Activated T-helper 2 cell treated with anti-CD3 and anti-CD28 coated beads, Interferon-gamma antibody, Interleukin-2, Interleukin-4, amounts not matched to agents 10 μg/mL and 5 μg/mL and 100 μg/mL, durations not matched to agents 14 hours and 24 hours and 36 hours (primary cell): ENCODE measurements at regions of chr20 and their contacts with region 1.

Region 1: DNA sequence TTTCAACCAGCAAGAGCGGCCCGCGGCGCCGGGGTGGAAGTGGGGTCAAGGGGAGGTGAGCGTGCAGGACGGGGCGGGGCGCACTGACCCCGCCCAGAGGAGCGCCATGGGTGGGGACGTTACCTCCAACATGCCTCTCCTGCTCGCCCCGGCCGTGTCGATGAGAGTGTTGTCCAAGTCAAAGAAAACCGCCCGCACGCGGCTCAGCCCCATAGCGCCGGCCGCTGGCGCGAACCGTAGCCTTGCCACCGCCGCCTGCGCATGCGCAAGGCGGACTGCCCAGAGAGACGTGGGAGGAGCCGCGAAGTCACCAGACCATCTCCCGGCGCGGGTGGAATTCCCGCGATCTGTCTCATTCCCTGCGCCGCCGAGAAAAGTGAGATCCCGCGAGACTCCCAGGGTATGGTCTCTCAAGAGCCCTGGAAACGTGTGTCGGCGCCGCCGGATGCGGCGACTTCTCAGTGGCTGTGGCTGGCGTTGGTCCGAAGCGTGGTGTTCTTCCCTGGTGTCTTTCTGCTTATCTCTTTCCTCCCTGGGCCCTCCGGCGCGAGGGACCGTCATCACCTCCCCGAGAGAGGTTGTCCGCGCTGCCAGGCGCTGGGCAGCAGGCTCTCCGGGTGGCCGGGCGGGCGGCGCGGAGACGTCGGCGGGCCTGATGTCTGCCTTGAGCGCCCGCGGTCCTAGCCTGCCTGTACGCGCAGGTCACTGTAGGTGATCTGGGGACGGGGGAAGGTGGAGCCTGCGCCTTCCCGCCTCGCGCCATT is at the start of gene NANP:
- DNase-seq: peak; percentile 89
- H3K4me3 Mint-ChIP-seq: peak within 1 kb of the TSS; percentile 89
- H3K27ac Mint-ChIP-seq: peak within 1 kb of the TSS; percentile 95
- H3K4me1 Mint-ChIP-seq: peaks cover 26% of the 10 kb centered on the region
- H3K27me3 Mint-ChIP-seq: no peaks in the 10 kb centered on the region
- total RNA-seq, gene NANP: 7.9 and 9.1 TPM in 2 replicates

Region 2: DNA sequence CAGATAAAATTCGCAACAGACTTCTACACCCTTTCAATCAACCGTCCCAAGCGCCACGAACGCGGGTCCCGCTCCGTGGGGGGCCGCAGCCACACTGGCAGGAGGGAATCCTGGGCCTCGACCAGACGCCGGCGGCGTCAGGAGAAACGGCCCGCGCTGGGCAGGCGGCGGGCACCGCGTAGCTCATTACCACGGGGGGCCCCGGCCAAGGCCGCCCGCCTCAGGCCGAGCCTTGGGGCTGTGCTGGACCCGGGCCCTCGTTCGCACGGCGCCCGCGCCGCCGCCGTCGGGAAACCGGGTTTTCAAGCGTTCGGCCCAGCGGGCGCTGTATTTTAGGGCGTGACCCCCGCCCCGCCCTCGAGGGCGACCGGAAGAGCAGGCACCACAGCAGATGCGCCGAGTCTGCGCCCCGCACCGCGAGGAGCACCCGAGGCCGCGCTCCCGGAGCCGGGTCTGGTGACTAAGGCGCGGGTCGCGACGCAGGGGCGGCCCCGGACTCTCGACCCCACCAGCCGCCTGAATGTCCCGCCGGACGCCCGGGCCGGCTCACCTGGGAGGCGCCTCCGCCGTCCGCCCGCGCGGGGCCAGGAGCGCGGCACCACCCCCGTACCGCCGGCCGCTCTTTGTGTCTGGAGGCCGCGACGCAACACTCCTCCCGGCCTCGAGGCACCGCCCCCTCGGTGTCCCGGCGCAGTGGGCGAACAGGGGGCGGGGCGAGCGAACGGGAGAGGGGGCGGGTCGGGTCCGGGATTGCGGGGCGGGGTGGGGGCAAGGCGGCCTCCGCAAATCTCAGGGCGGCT is 38.8 kb before region 1 on chr20 and contains the start of gene NINL:
- intact Hi-C with region 1: loop called (anchors 1 kb)
- DNase-seq: peak; percentile 52
- H3K4me3 Mint-ChIP-seq: peak within 1 kb of the TSS; percentile 80
- H3K27ac Mint-ChIP-seq: peak within 1 kb of the TSS; percentile 58
- H3K4me1 Mint-ChIP-seq: peaks cover 12% of the 10 kb centered on the region
- H3K27me3 Mint-ChIP-seq: no peaks in the 10 kb centered on the region
- total RNA-seq, gene NINL: 6.9 and 7.5 TPM in 2 replicates

Region 3: DNA sequence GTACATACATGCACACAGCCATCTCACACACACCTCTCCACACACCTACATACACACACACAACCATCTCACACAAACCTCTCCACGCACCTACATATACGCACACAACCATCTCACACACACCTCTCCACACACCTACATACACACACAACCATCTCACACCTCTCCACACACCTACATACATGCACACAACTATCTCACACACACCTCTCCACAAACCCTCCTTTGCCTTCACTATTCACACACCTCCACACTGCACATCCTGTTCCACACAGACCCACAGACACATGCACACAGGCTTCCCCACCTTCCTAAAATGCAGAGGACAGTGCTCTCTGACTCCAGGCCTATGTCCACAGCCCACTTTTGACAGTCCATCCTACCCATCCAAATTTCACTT is 22.3 kb before region 1 on chr20:
- intact Hi-C with region 1: loop called (anchors 2 kb)
- DNase-seq: no peak
- H3K4me3 Mint-ChIP-seq: no peak overlapping the region
- H3K27ac Mint-ChIP-seq: no peak overlapping the region
- H3K4me1 Mint-ChIP-seq: peaks cover 10% of the 10 kb centered on the region
- H3K27me3 Mint-ChIP-seq: peaks cover 1% of the 10 kb centered on the region

Region 4: GRCh38 chr20:25643716-25644115 is 19.8 kb after region 1 on chr20:
- intact Hi-C with region 1: no loop called
- DNase-seq: no peak
- H3K4me3 Mint-ChIP-seq: no peak overlapping the region
- H3K27ac Mint-ChIP-seq: no peak overlapping the region
- H3K4me1 Mint-ChIP-seq: no peaks in the 10 kb centered on the region
- H3K27me3 Mint-ChIP-seq: no peaks in the 10 kb centered on the region